ENCODE measurements at regions of chr14 and their contacts with region 1.

Region 1: DNA sequence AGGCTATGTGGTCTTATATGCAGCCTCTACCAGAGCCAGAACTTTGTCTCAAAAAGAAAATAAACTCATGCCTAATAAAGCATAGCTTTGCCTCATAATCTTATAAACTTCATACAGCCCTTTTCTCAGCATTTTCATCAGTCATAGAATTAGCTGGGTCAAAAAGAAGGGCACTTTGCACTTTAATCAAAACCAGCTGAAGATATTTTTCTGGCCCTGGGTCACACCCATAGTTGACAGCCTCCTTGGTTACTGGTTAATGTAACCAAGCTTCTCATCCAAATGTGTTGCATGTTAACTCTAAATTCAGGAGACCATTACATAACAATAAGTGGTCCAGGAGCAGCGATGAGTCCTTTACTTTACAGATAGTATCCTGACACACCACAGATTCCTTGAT is 558.2 kb downstream of the FLRT2 start:
- DNase-seq: no peak
- ATAC-seq: no peak
- H3K4me3 ChIP-seq: no peak overlapping the region
- H3K27ac ChIP-seq: no peak overlapping the region
- H3K4me1 ChIP-seq: no peaks in the 10 kb centered on the region
- H3K27me3 ChIP-seq: no peaks in the 10 kb centered on the region
- CTCF ChIP-seq: no peak
- EP300 ChIP-seq: no peak
- POLR2A ChIP-seq: no peak
- RAD21 ChIP-seq: no peak

Region 2: GRCh38 chr14:85934123-85934885 is 153.9 kb before region 1 on chr14:
- CTCF ChIA-PET with region 1: no interaction called
- POLR2A ChIA-PET with region 1: no interaction called
- in situ Hi-C with region 1: no loop called
- intact Hi-C with region 1: no loop called
- DNase-seq: peak; percentile 15
- ATAC-seq: peak; percentile 68
- H3K4me3 ChIP-seq: peak overlapping the region; percentile 55 to 86 (median 62)
- H3K27ac ChIP-seq: no peak overlapping the region
- H3K4me1 ChIP-seq: no peaks in the 10 kb centered on the region
- H3K27me3 ChIP-seq: no peaks in the 10 kb centered on the region
- CTCF ChIP-seq: no peak
- EP300 ChIP-seq: no peak
- POLR2A ChIP-seq: no peak
- RAD21 ChIP-seq: no peak

Region 3: DNA sequence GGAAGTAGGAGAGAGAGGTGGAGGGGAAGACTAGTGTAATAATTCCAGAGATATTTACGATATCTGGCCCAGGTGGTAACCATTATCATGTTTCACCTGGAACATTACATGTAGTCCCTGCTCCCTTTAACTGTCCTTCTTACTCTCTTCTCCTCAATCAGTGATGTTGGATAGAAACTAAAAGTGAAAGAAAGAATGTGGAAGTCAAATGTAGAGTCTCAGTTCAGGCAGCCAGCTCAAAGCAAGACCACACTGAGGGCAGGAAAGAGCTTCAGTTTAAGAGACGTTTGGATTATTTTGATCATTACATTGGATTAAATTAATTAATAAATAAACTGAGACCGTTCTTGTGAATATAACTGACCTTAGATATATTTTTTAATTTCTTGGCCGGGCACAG is 36.2 kb after region 1 on chr14:
- CTCF ChIA-PET with region 1: no interaction called
- POLR2A ChIA-PET with region 1: no interaction called
- in situ Hi-C with region 1: no loop called
- intact Hi-C with region 1: loop called (anchors 2 kb)
- DNase-seq: no peak
- ATAC-seq: no peak
- H3K4me3 ChIP-seq: no peak overlapping the region
- H3K27ac ChIP-seq: no peak overlapping the region
- H3K4me1 ChIP-seq: no peaks in the 10 kb centered on the region
- H3K27me3 ChIP-seq: no peaks in the 10 kb centered on the region
- CTCF ChIP-seq: no peak
- EP300 ChIP-seq: no peak
- POLR2A ChIP-seq: no peak
- RAD21 ChIP-seq: no peak